Activated CD4-positive, alpha-beta memory T cell treated with anti-CD3 and anti-CD28 coated beads for 36 hours (primary cell): ENCODE measurements at regions of chr6 and their contacts with region 1.

Region 1: GRCh38 chr6:42315991-42316378 is 98.3 kb upstream of the MRPS10 start:
- DNase-seq: peak; percentile 71
- H3K4me3 Mint-ChIP-seq: no peak overlapping the region
- H3K27ac Mint-ChIP-seq: peak overlapping the region; percentile 80
- H3K4me1 Mint-ChIP-seq: peaks cover 65% of the 10 kb centered on the region
- H3K27me3 Mint-ChIP-seq: no peaks in the 10 kb centered on the region

Region 2: DNA sequence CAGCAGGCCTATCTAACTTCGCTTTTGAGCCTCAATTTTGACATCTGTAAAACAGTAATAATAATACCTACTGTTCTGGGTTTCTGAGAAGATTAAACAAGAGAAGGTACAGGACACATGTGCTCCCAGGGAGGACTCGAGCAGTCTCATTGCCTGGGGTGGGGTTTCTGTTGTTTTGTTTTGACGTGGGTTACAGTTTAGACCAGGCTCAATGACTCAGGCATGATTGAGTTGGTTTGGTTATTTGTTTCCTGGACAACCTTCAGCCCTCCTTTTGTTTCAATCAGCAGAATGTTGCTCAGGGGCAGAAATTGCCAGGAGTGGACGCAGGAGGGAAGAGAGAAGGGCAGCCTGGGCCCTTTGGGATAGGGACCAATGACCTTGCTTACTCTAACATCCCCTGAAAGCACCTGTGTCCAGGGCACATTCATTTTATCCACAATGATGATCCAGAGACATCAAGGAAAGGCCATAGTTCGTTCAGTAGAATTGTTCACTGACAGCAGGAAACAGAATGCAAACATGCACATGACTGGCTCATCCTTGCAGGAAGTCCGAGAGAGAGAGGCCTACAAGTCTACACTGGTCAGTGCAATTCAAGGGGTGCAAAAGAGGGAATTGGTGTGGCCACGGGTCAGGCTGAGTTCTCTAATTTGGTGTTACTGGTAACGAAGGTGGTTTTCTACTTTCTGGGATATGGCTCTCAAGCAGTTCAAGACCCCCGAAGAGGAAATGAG is 23.8 kb before region 1 on chr6:
- CTCF ChIA-PET with region 1: no interaction called
- POLR2A ChIA-PET with region 1: no interaction called
- intact Hi-C with region 1: loop called (anchors 2 kb)
- DNase-seq: peak; percentile 61
- H3K4me3 Mint-ChIP-seq: no peak overlapping the region
- H3K27ac Mint-ChIP-seq: peak overlapping the region; percentile 76
- H3K4me1 Mint-ChIP-seq: peaks cover 58% of the 10 kb centered on the region
- H3K27me3 Mint-ChIP-seq: no peaks in the 10 kb centered on the region

Region 3: DNA sequence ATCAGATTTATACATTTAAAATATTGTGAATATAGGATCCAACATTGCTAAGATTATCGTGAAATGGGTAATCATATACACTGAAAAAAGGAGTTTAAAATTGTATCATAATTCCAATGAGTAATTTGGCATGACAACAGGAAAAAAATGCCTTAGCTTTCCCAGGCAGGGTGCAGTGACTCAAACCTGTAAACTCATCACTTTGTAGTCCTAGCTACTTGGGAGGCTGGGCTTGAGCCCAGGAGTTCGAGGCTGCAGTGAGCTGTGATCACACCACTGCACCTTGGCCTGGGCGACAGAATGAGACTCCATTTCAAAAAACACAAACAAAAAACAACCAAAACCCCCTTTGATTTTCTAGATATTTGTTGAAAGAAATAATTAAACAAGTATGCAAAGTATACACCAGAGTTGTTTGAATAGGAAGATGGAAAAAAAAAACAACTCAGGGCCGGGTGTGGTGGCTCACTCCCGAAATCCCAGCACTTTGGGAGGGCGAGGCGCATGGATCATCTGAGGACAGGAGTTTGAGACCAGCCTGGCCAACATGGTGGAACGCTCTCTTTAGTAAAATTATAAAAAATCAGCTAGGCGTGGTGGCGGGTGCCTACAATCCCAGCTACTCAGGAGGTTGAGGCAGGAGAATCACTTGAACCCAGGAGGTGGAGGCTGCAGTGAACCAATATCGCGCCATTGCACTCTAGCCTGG is 37.0 kb after region 1 on chr6:
- CTCF ChIA-PET with region 1: no interaction called
- POLR2A ChIA-PET with region 1: interaction called, 3 read pairs
- intact Hi-C with region 1: loop called (anchors 1 kb)
- DNase-seq: no peak
- H3K4me3 Mint-ChIP-seq: no peak overlapping the region
- H3K27ac Mint-ChIP-seq: no peak overlapping the region
- H3K4me1 Mint-ChIP-seq: peaks cover 18% of the 10 kb centered on the region
- H3K27me3 Mint-ChIP-seq: no peaks in the 10 kb centered on the region

Region 4: DNA sequence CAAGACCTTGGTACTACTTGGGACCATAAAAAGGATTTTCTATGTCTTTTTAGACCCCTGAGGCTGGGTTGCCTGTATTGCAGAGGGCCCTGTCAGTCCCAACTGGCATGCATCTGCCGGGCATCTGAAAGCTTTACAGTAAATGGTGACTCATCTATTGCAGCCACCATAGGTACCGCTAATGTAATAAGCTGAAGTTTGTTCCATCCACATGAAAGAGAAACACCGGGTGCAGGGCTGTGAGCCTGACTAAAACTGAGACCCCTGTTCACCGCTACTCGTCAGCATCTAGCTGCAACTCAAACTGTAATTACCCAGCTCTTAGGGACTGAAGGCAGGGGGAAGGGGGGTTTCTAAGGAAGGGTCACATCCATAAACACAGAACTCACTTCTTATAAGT is 86.2 kb after region 1 on chr6:
- CTCF ChIA-PET with region 1: no interaction called
- POLR2A ChIA-PET with region 1: no interaction called
- intact Hi-C with region 1: no loop called
- DNase-seq: peak; percentile 85
- H3K4me3 Mint-ChIP-seq: no peak overlapping the region
- H3K27ac Mint-ChIP-seq: peak overlapping the region; percentile 76
- H3K4me1 Mint-ChIP-seq: peaks cover 81% of the 10 kb centered on the region
- H3K27me3 Mint-ChIP-seq: no peaks in the 10 kb centered on the region